GM12878 (cell line): ENCODE measurements at regions of chr17 and their contacts with region 1.

Region 1: GRCh38 chr17:35119368-35120165 is at the start of gene RAD51D:
- DNase-seq: peak; percentile 33
- ATAC-seq: peak; percentile 90
- H3K4me3 ChIP-seq: peak within 1 kb of the TSS; percentile 88
- H3K27ac ChIP-seq: peak within 1 kb of the TSS; percentile 84
- H3K4me1 ChIP-seq: no peaks in the 10 kb centered on the region; the same call in 1 of the 2 replicates
- H3K27me3 ChIP-seq: no peaks in the 10 kb centered on the region
- CTCF ChIP-seq: peak; percentile 81 to 95 (median 92); a peak in 5 of 6 replicates
- EP300 ChIP-seq: 0 out of 4 replicates have a peak, but pooled peaks of 1 of the 2 experiments have one; percentile 31
- POLR2A ChIP-seq: peak; percentile 84
- RAD21 ChIP-seq: peak; percentile 83
- polyA plus RNA-seq, gene RAD51D: 2.6 to 4.9 TPM

Region 2: GRCh38 chr17:34542700-34543336 is 576.7 kb before region 1 on chr17:
- CTCF ChIA-PET with region 1: interaction called, 55 read pairs
- POLR2A ChIA-PET with region 1: interaction called, 3 read pairs
- RAD21 ChIA-PET with region 1: interaction called, 31 read pairs
- SMC1A ChIA-PET with region 1: interaction called, 21 read pairs
- in situ Hi-C with region 1: loop called (anchors 5 kb)
- intact Hi-C with region 1: loop called (anchors 1 kb)
- DNase-seq: no peak
- ATAC-seq: peak; percentile 68
- H3K4me3 ChIP-seq: no peak overlapping the region
- H3K27ac ChIP-seq: no peak overlapping the region
- H3K4me1 ChIP-seq: no peaks in the 10 kb centered on the region
- H3K27me3 ChIP-seq: no peaks in the 10 kb centered on the region; a peak in 1 of 4 replicates
- CTCF ChIP-seq: peak; percentile 72 to 91 (median 86)
- EP300 ChIP-seq: no peak
- POLR2A ChIP-seq: no peak
- RAD21 ChIP-seq: peak; percentile 81

Region 3: GRCh38 chr17:34990921-34991365 is 128.6 kb before region 1 on chr17:
- CTCF ChIA-PET with region 1: interaction called, 149 read pairs
- POLR2A ChIA-PET with region 1: no interaction called
- RAD21 ChIA-PET with region 1: interaction called, 32 read pairs
- SMC1A ChIA-PET with region 1: interaction called, 101 read pairs
- in situ Hi-C with region 1: loop called (anchors 5 kb)
- intact Hi-C with region 1: no loop called
- DNase-seq: no peak
- ATAC-seq: no peak
- H3K4me3 ChIP-seq: no peak overlapping the region
- H3K27ac ChIP-seq: no peak overlapping the region
- H3K4me1 ChIP-seq: peaks cover 3% of the 10 kb centered on the region; the same call in 1 of the 2 replicates
- H3K27me3 ChIP-seq: no peaks in the 10 kb centered on the region
- CTCF ChIP-seq: no peak
- EP300 ChIP-seq: no peak
- POLR2A ChIP-seq: no peak
- RAD21 ChIP-seq: no peak

Region 4: DNA sequence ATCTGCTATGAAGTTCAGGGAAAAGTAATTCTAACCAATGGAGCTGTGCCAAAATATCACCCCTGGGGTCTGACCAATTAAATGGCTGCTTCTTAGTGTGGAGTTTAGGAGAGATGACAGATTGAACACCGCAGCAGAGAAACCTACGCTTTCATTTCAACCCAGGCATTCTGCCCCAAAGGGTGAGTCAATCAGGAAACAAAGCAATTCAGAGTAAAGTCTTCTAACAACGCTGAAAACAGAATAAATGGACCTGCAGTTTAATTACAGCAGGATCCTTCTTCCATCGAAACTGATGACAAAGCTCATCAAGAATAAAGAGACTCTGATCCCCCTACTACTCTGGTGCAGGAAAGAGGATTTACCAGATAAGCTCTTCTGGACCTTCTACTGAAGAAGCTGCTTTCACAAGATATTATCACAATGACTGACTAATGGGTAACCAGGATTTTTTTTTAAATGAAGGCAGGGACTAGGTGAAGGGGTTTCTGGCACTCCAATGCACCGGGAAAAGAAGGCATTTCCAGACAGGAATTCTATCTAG is 72.8 kb before region 1 on chr17:
- CTCF ChIA-PET with region 1: interaction called, 5 read pairs
- POLR2A ChIA-PET with region 1: no interaction called
- RAD21 ChIA-PET with region 1: interaction called, 11 read pairs
- SMC1A ChIA-PET with region 1: interaction called, 5 read pairs
- in situ Hi-C with region 1: no loop called
- intact Hi-C with region 1: no loop called
- DNase-seq: peak; percentile 81
- ATAC-seq: peak; percentile 87
- H3K4me3 ChIP-seq: peak overlapping the region; percentile 57
- H3K27ac ChIP-seq: peak overlapping the region; percentile 75
- H3K4me1 ChIP-seq: peaks cover 42% of the 10 kb centered on the region
- H3K27me3 ChIP-seq: no peaks in the 10 kb centered on the region
- CTCF ChIP-seq: no peak
- EP300 ChIP-seq: peak in 1 of 2 experiments; percentile 42; a peak in 1 of 4 replicates
- POLR2A ChIP-seq: peak; percentile 50
- RAD21 ChIP-seq: no peak

Region 5: DNA sequence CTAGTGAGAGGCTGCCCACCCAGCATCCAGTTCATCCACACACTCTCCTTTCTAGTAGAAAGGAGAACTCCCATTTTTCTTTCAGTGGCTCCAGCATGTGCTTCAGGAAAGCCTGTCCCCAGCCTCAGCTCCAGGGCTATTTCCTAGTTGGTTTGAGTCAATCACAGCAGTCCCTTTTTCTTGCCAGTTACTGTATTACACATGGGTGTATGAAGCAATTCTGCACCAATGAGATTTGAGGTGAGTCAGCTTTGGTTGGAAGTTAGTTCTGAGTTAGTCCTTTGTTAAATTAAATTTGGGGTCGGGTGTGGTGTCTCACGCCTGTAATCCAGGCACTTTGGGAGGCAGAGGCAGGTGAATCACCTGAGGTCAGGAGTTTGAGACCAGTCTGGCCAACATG is 24.7 kb before region 1 on chr17:
- CTCF ChIA-PET with region 1: interaction called, 30 read pairs
- POLR2A ChIA-PET with region 1: no interaction called
- RAD21 ChIA-PET with region 1: interaction called, 34 read pairs
- SMC1A ChIA-PET with region 1: interaction called, 13 read pairs
- in situ Hi-C with region 1: no loop called
- intact Hi-C with region 1: no loop called
- DNase-seq: no peak
- ATAC-seq: no peak
- H3K4me3 ChIP-seq: no peak overlapping the region
- H3K27ac ChIP-seq: no peak overlapping the region
- H3K4me1 ChIP-seq: peaks cover 1% of the 10 kb centered on the region
- H3K27me3 ChIP-seq: no peaks in the 10 kb centered on the region
- CTCF ChIP-seq: no peak
- EP300 ChIP-seq: no peak
- POLR2A ChIP-seq: no peak
- RAD21 ChIP-seq: no peak

Region 6: DNA sequence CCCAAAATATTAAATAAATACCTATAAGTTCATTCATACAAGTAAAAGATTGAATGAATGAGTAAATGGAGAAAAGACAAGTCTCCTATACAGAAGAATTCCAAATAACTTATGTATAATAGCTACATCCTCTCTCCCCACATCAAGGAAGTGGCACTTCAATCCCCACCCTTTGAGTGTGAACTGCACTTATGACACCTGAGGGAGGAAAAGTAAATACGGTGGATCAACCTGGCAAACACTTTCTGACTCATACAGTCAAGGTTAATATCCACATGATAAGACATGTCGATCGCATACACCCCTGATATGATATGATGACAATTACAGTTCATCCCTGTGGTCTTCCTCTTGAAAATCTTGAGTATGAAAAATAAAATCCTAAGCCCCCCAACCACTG is 399.9 kb after region 1 on chr17:
- CTCF ChIA-PET with region 1: no interaction called
- POLR2A ChIA-PET with region 1: no interaction called
- RAD21 ChIA-PET with region 1: no interaction called
- SMC1A ChIA-PET with region 1: no interaction called
- in situ Hi-C with region 1: no loop called
- intact Hi-C with region 1: no loop called
- DNase-seq: no peak
- ATAC-seq: no peak
- H3K4me3 ChIP-seq: no peak overlapping the region
- H3K27ac ChIP-seq: no peak overlapping the region
- H3K4me1 ChIP-seq: 0 out of 2 replicates have a peak, but pooled peaks cover 3% of the 10 kb centered on the region
- H3K27me3 ChIP-seq: no peaks in the 10 kb centered on the region
- CTCF ChIP-seq: no peak
- EP300 ChIP-seq: no peak
- POLR2A ChIP-seq: no peak
- RAD21 ChIP-seq: no peak